H1 (cell line): ENCODE measurements at regions of chr18 and their contacts with region 1.

Region 1: DNA sequence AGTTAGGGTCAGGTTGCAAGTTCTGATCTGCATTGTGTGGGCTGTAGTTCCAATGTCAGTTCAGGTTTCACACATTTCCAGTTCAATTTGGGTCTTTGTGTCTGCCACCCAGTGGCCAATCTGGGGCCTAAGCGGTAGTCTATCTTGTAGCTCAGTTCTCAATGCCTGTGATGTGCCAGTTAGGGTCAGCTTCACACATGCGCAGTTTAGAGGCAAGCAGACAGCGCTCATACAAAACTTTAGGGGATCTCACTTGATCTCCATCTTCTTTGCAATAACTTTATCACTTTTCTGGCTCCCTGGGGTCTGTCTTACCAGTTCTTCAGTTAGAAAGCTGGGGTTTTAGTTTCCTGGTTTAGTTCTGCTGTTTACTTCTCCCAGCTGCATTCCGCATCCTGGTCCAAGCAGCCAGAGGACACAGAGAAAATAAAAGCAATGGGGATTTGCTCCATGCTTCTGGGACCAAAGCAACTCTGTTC is 11.0 kb upstream of the ZNF24 start:
- DNase-seq: peak; percentile 62 to 66
- H3K4me3 ChIP-seq: no peak overlapping the region; a peak in 1 of 8 replicates
- H3K27ac ChIP-seq: no peak overlapping the region
- H3K4me1 ChIP-seq: peaks cover 0 to 4% (median 2%) of the 10 kb centered on the region in 4 experiments; a peak in 2 of 7 replicates
- H3K27me3 ChIP-seq: no peaks in the 10 kb centered on the region
- CTCF ChIP-seq: peak; percentile 60 to 89 (median 67)
- EP300 ChIP-seq: no peak
- POLR2A ChIP-seq: no peak; a peak in 1 of 3 replicates
- RAD21 ChIP-seq: peak; percentile 59 to 73

Region 2: DNA sequence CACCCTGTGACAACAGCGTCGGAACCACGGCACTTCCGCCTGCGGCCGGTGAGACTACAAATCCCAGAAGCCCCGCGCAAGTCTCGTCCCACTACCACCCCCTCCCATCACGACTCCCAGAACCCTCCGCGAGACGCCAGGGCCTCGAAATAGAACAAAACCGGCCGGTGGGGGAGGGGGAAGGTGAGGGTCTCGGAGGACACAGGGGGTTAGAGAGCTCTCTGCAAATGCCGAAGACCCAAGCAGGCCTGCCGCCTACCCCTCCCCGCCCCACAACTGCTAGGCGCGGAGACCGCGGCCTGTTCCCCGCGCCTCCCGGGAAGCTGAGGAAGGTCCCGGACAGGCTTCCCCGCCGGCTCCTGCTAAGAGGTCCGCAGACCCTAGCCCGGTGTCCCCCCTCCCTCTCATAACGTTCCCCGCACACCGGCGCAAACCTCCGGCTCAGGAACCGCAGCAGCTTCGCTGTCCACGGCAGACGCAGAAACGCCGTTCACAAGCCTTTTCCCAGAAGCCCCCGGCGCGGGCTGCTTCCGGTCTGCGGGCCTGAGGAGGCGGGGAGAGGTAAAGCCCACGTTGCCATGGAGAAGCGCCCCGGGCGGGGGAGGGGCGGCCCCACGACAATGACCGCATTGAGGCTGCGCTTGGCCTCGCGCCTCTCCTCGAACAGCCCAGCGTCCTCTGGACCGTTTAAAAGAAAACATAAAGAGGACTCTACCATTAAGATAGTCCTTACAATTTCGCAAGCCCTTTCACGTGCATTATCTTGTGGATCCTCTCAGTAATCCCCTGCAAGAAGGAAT is 11.0 kb before region 1 on chr18 and contains the start of gene ZNF24:
- CTCF ChIA-PET with region 1: interaction called, 18 read pairs
- POLR2A ChIA-PET with region 1: interaction called, 14 read pairs
- DNase-seq: peak; percentile 68 to 94
- H3K4me3 ChIP-seq: peak within 1 kb of the TSS; percentile 91 to 97 (median 92)
- H3K27ac ChIP-seq: peak within 1 kb of the TSS; percentile 98
- H3K4me1 ChIP-seq: peaks cover 0 to 5% (median 1%) of the 10 kb centered on the region in 4 experiments; a peak in 3 of 7 replicates
- H3K27me3 ChIP-seq: no peaks in the 10 kb centered on the region
- CTCF ChIP-seq: no peak
- EP300 ChIP-seq: no peak; a peak in 1 of 3 replicates
- POLR2A ChIP-seq: peak; percentile 87 to 92
- RAD21 ChIP-seq: 0 out of 4 replicates have a peak, but pooled peaks of 1 of the 2 experiments have one; percentile 1
- total RNA-seq, gene ZNF24: 56.9 and 60.1 TPM in 2 replicates

Region 3: DNA sequence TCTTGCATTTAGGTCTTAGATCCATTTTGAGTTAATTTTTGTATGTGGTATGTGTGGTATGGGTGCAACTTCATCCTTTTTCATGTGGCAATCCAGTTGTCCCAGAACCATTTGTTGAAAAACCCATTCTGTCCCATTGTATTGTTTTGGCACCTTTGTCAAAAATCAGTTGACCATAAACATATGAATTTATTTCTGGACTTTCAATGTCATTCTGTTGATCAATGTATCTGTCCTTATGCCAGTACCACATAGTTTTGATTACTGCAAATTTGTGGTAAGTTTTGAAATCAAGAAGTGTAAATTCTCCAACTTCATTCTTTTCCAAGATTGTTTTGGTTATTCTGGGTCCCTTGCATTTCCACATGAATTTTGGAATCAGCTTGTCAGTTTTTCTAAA is 38.5 kb after region 1 on chr18:
- CTCF ChIA-PET with region 1: no interaction called
- POLR2A ChIA-PET with region 1: no interaction called
- DNase-seq: no peak
- H3K4me3 ChIP-seq: no peak overlapping the region
- H3K27ac ChIP-seq: no peak overlapping the region
- H3K4me1 ChIP-seq: no peaks in the 10 kb centered on the region
- H3K27me3 ChIP-seq: peaks cover 0 to 1% (median 0%) of the 10 kb centered on the region in 4 experiments; a peak in 1 of 7 replicates
- CTCF ChIP-seq: no peak
- EP300 ChIP-seq: no peak
- POLR2A ChIP-seq: no peak
- RAD21 ChIP-seq: no peak